K562 (cell line): ENCODE measurements at regions of chr16 and their contacts with region 1.

Region 1: DNA sequence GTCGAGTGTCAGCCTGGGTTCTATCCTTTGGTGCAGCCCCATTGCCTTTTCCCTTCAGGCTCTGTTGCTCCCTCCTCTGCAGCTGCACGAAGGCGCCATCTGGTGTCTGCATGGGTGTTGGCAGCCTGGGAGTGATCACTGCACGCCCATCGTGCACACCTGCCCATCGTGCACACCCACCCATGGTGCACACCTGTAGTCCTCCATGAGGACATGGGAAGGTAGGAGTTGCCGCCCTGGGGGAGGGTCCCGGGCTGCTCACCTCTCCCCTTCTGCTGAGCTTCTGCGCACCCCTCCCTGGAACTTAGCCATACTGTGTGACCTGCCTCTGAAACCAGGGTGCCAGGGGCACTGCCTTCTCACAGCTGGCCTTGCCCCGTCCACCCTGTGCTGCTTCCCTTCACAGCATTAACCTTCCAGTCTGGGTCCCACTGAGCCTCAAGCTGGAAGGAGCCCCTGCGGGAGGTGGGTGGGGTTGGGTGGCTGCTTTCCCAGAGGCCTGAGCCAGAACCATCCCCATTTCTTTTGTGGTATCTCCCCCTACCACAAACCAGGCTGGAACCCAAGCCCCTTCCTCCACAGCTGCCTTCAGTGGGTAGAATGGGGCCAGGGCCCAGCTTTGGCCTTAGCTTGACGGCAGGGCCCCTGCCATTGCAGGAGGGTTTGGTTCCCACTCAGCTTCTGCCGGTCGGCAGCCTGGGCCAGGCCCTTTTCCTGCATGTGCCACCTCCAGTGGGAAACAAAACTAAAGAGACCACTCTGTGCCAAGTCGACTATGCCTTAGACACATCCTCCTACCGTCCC is 2.9 kb downstream of the CTRL start:
- DNase-seq: peak; percentile 75 to 81 (median 79)
- ATAC-seq: peak; percentile 93
- H3K4me3 ChIP-seq: no peak overlapping the region
- H3K27ac ChIP-seq: no peak overlapping the region
- H3K4me1 ChIP-seq: peaks cover 1 to 33% of the 10 kb centered on the region in 2 experiments; a peak in 3 of 5 replicates
- H3K27me3 ChIP-seq: no peaks in the 10 kb centered on the region
- CTCF ChIP-seq: peak; percentile 95 to 97 (median 96)
- EP300 ChIP-seq: no peak
- POLR2A ChIP-seq: no peak
- RAD21 ChIP-seq: peak; percentile 87 to 95

Region 2: GRCh38 chr16:67667817-67668494 is 260.8 kb before region 1 on chr16:
- CTCF ChIA-PET with region 1: interaction called, 31 read pairs
- POLR2A ChIA-PET with region 1: interaction called, 3 read pairs
- in situ Hi-C with region 1: loop called (anchors 5 kb)
- intact Hi-C with region 1: loop called (anchors 2 kb)
- DNase-seq: peak; percentile 85 to 90 (median 86)
- ATAC-seq: peak; percentile 89
- H3K4me3 ChIP-seq: no peak overlapping the region
- H3K27ac ChIP-seq: no peak overlapping the region
- H3K4me1 ChIP-seq: peaks cover 14 to 39% of the 10 kb centered on the region in 2 experiments
- H3K27me3 ChIP-seq: no peaks in the 10 kb centered on the region
- CTCF ChIP-seq: peak; percentile 93 to 99 (median 96)
- EP300 ChIP-seq: no peak
- POLR2A ChIP-seq: no peak
- RAD21 ChIP-seq: peak; percentile 74 to 84

Region 3: DNA sequence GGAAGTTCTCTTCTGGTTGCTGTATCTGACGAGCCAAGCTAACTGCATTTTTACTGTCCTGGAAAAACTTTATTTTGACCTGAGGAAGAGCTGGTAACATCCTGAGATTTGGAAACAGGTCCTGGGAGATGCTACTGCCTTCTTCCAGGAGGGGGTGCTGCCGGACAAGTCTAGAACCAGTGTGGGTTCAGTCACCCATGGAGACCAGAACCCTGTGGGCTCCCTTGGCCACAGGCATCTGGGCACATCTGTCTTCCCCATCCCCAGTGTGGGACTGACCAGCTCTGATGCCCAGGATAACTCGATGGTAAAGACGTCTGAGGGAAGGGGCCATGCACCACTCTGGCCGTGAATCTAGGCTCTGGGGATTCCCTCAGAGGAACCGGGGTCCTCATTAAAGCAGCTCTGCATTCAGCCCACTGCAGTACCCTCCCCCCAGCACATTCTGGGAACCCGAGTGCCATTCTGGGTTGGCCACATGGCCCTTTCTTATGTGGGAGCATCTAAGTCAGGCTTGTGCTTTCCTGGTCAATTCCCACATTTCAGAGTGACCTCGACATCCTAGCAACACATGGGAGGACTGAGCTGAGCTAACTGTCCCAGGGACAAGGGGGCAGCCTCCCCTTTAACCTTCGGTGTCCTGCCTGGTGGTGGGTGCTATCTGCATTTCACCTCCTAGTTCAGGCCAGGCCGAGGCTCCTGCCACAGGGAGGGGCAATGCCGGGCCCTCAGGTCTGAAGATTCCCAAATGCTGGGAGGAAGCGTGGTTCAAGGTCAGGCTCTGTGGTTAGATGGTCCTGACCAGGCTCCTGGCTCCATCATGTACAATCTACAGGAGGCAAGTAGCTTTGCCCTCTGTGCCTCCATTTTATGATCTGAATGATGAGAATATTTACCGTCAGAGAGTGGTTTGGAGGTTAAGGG is 255.8 kb before region 1 on chr16:
- CTCF ChIA-PET with region 1: interaction called, 31 read pairs
- POLR2A ChIA-PET with region 1: interaction called, 3 read pairs
- in situ Hi-C with region 1: loop called (anchors 5 kb)
- intact Hi-C with region 1: loop called (anchors 2 kb)
- DNase-seq: peak; percentile 77 to 83 (median 80)
- ATAC-seq: peak; percentile 82
- H3K4me3 ChIP-seq: no peak overlapping the region
- H3K27ac ChIP-seq: no peak overlapping the region
- H3K4me1 ChIP-seq: peaks cover 0 to 10% of the 10 kb centered on the region in 2 experiments; a peak in 3 of 5 replicates
- H3K27me3 ChIP-seq: no peaks in the 10 kb centered on the region
- CTCF ChIP-seq: peak; percentile 83 to 94 (median 93)
- EP300 ChIP-seq: no peak
- POLR2A ChIP-seq: no peak
- RAD21 ChIP-seq: peak; percentile 87 to 90

Region 4: GRCh38 chr16:67816240-67817031 is 112.3 kb before region 1 on chr16:
- CTCF ChIA-PET with region 1: interaction called, 22 read pairs
- POLR2A ChIA-PET with region 1: no interaction called
- in situ Hi-C with region 1: loop called (anchors 5 kb)
- intact Hi-C with region 1: loop called (anchors 1 kb)
- DNase-seq: peak; percentile 86 to 94 (median 93)
- ATAC-seq: peak; percentile 97
- H3K4me3 ChIP-seq: no peak overlapping the region
- H3K27ac ChIP-seq: no peak overlapping the region
- H3K4me1 ChIP-seq: peaks cover 5 to 9% of the 10 kb centered on the region in 2 experiments; a peak in 3 of 5 replicates
- H3K27me3 ChIP-seq: no peaks in the 10 kb centered on the region
- CTCF ChIP-seq: peak; percentile 99 to 100 (median 100)
- EP300 ChIP-seq: peak; percentile 23; the same call in 1 of the 2 replicates
- POLR2A ChIP-seq: no peak
- RAD21 ChIP-seq: peak; percentile 94 to 96

Region 5: DNA sequence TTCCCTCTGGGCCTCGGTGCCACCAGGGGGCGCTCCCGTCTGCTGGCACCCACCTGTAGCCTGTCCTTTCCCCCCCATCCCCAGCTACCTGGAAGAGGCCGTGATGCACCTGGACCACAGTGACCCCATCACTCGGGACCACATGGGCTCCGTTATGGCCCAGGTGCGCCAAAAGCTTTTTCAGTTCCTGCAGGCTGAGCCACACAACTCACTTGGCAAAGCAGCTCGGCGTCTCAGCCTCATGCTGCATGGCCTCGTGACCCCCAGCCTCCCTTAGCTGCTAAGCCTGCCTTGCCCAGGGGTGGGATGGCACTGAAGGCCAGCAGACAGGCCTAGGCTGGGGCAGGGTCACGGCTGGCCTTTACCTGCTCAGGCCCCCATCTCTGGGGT is 44.9 kb before region 1 on chr16:
- CTCF ChIA-PET with region 1: interaction called, 35 read pairs
- POLR2A ChIA-PET with region 1: interaction called, 3 read pairs
- in situ Hi-C with region 1: no loop called
- intact Hi-C with region 1: loop called (anchors 1 kb)
- DNase-seq: peak; percentile 62 to 77 (median 74)
- ATAC-seq: peak; percentile 69
- H3K4me3 ChIP-seq: no peak overlapping the region
- H3K27ac ChIP-seq: no peak overlapping the region
- H3K4me1 ChIP-seq: peaks cover 6 to 40% of the 10 kb centered on the region in 2 experiments; a peak in 4 of 5 replicates
- H3K27me3 ChIP-seq: no peaks in the 10 kb centered on the region
- CTCF ChIP-seq: peak; percentile 81 to 83 (median 81)
- EP300 ChIP-seq: no peak
- POLR2A ChIP-seq: no peak
- RAD21 ChIP-seq: peak; percentile 76 to 79